Activated CD8-positive, alpha-beta T cell treated with anti-CD3 and anti-CD28 coated beads for 36 hours (primary cell): ENCODE measurements at regions of chr12 and their contacts with region 1.

Region 1: GRCh38 chr12:110449799-110450497 is at the start of gene ARPC3:
- DNase-seq: peak; percentile 98
- ATAC-seq: peak; percentile 98
- H3K4me3 Mint-ChIP-seq: peak within 1 kb of the TSS; percentile 87
- H3K27ac Mint-ChIP-seq: peak within 1 kb of the TSS; percentile 100
- H3K4me1 Mint-ChIP-seq: peaks cover 34% of the 10 kb centered on the region
- H3K27me3 Mint-ChIP-seq: no peaks in the 10 kb centered on the region
- CTCF ChIP-seq: peak; percentile 74
- total RNA-seq, gene ARPC3: 229 to 240 TPM

Region 2: GRCh38 chr12:110501752-110502738 is 52.1 kb after region 1 on chr12 and contains the starts of genes RAD9B and VPS29:
- CTCF ChIA-PET with region 1: interaction called, 10 read pairs
- POLR2A ChIA-PET with region 1: interaction called, 4 read pairs
- intact Hi-C with region 1: no loop called
- DNase-seq: peak; percentile 100
- ATAC-seq: peak; percentile 95
- H3K4me3 Mint-ChIP-seq: peak within 1 kb of the TSS; percentile 97
- H3K27ac Mint-ChIP-seq: peak within 1 kb of the TSS; percentile 96
- H3K4me1 Mint-ChIP-seq: peaks cover 30% of the 10 kb centered on the region
- H3K27me3 Mint-ChIP-seq: no peaks in the 10 kb centered on the region
- CTCF ChIP-seq: no peak
- total RNA-seq, gene RAD9B: 1.7 to 1.9 TPM
- total RNA-seq, gene VPS29: 71.7 to 76.4 TPM

Region 3: GRCh38 chr12:110606253-110606611 is 156.3 kb after region 1 on chr12:
- CTCF ChIA-PET with region 1: interaction called, 51 read pairs
- POLR2A ChIA-PET with region 1: interaction called, 3 read pairs
- intact Hi-C with region 1: no loop called
- DNase-seq: no peak
- ATAC-seq: no peak
- H3K4me3 Mint-ChIP-seq: peak overlapping the region; percentile 81
- H3K27ac Mint-ChIP-seq: peak overlapping the region; percentile 86
- H3K4me1 Mint-ChIP-seq: peaks cover 5% of the 10 kb centered on the region
- H3K27me3 Mint-ChIP-seq: no peaks in the 10 kb centered on the region
- CTCF ChIP-seq: no peak

Region 4: DNA sequence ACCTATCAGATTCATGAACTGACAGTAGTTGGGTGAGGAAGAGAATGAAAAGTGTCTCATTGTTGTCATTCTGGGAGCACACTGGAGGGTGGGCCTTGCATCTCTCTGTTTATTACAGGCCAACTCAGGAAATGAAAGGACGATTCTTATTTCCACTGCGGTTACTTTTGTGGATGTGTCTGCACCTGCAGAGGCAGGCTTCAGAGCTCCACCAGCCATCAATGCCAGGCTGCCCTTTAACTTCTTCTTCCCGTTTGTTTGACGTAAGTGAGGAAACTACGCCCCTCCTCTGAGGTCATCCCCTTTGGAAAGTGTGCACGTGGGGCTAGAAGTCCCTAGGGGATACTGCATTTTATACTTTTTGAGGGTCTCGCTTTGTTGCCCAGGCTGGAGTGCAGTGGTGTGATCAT is 197.7 kb after region 1 on chr12:
- CTCF ChIA-PET with region 1: no interaction called
- POLR2A ChIA-PET with region 1: no interaction called
- intact Hi-C with region 1: no loop called
- DNase-seq: peak; percentile 61
- ATAC-seq: peak; percentile 96
- H3K4me3 Mint-ChIP-seq: no peak overlapping the region
- H3K27ac Mint-ChIP-seq: peak overlapping the region; percentile 80
- H3K4me1 Mint-ChIP-seq: peaks cover 34% of the 10 kb centered on the region
- H3K27me3 Mint-ChIP-seq: no peaks in the 10 kb centered on the region
- CTCF ChIP-seq: no peak